ENCODE measurements at regions of chr15 and their contacts with region 1.

Region 1: DNA sequence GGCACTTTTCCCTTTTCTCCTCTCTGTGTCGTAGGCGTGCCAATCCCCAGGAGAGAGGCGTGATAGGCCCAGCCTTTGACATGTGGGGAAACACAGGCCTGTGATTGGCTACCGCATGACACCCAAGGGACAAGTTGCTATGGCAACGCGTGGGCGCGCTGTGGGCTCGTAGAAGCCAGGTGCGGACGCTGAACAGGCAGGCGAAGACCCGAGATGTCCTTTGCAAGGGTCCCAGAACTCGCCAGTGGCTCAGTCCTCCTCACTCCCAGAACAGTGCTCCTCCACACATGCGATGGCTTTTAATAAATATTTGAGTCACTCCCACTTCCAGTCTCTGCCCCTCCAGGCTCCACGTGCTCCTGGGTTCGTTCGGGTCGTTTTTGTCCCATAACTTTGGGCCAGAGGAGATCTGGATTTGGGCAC is 4.2 kb downstream of the SLC51B start:
- DNase-seq: peak; percentile 89
- H3K4me3 ChIP-seq: peak overlapping the region; percentile 11 to 45 (median 40)
- H3K27ac ChIP-seq: no peak overlapping the region
- H3K4me1 ChIP-seq: peaks cover 11% of the 10 kb centered on the region
- H3K27me3 ChIP-seq: no peaks in the 10 kb centered on the region
- CTCF ChIP-seq: no peak

Region 2: GRCh38 chr15:65086017-65086679 is 36.7 kb after region 1 on chr15:
- CTCF ChIA-PET with region 1: no interaction called
- dilution Hi-C with region 1: loop called (anchors 5 kb)
- in situ Hi-C with region 1: no loop called
- intact Hi-C with region 1: loop called (anchors 1 kb)
- DNase-seq: peak; percentile 44
- H3K4me3 ChIP-seq: no peak overlapping the region
- H3K27ac ChIP-seq: no peak overlapping the region
- H3K4me1 ChIP-seq: peaks cover 37% of the 10 kb centered on the region
- H3K27me3 ChIP-seq: no peaks in the 10 kb centered on the region
- CTCF ChIP-seq: peak; percentile 64 to 69